Posterior cingulate gyrus (tissue), 11 donors: ENCODE measurements at regions of chr2 and their contacts with region 1.

Region 1: DNA sequence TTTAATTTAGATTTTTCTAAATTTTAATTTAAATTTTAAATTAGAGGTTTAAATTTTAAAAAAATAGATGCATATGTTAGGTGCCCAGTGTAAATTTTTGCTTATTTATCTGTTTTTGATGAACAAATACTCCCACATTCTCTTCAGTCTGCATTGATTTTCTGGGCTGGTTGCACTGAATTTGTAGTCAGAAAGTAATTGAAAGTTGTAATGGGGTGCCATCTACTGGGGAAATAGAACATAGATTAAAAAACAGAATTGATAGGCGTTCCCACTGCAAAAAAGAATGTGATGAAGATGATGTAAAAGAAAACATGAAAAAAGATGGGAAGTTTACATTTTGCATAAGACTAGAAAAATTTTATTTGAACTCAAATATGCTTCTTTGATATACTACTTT is 51.7 kb upstream of the CCDC85A start:
- DNase-seq: no peak

Region 2: DNA sequence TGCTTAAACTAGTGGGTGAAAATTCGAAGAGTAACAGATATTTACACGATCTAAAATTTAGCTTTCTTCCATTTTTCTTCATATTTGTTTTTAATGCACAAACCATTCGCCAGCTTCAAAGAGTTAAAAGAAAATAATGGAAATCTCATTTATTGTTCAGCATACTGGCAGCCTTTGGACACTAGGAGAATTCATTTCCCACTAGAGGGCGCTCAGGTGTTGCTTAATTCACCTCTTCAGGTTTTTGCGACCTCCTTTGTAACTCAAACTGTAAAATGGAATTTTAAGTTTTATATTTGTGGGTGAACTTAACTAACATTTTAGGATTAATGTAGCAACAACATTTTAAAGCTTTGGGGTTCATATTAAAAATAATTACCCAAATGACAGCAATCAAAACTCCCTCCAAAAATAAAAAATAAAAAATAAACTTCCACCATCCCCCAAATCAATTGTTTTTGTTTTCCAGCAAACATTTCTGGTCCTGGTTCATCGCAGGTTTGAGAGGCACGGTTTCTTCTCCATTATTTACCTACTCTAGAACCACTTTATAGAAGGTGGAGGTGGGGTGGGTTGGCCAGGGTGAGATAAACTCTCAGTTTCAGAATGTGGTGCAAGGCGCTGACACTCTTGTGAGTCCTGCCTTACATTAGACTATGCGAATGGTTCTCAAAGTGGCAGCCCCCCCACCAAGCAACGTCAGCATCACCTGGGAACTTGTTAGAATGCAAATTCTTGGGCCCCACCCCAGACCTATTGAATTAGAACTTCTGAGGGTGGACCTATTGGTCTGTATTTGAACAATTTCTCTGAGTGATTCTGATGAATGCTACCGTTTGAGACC is 413.8 kb before region 1 on chr2:
- intact Hi-C with region 1: loop called (anchors 1 kb)
- DNase-seq: peak in 4 of 10 donors; percentile 41 to 59 (median 45)

Region 3: DNA sequence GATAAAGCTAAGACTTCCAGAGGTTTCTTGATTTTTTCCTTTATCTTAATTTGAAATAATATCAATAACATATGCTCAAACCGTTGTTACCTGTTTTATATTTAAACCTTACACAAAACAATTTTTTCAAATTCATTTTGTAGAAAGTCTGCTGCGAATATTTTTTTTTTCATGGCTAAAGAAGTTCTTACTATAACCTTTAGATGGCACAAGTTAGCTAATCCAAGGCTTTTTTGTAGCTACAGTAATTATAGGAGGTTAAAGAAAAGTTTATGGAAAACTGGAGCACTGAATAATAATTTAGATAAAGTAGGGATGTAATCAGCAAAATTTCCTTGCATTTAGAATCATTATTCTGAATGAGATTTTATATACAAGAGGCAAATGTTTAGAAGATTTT is 360.5 kb before region 1 on chr2:
- intact Hi-C with region 1: loop called (anchors 5 kb)
- DNase-seq: no peak

Region 4: DNA sequence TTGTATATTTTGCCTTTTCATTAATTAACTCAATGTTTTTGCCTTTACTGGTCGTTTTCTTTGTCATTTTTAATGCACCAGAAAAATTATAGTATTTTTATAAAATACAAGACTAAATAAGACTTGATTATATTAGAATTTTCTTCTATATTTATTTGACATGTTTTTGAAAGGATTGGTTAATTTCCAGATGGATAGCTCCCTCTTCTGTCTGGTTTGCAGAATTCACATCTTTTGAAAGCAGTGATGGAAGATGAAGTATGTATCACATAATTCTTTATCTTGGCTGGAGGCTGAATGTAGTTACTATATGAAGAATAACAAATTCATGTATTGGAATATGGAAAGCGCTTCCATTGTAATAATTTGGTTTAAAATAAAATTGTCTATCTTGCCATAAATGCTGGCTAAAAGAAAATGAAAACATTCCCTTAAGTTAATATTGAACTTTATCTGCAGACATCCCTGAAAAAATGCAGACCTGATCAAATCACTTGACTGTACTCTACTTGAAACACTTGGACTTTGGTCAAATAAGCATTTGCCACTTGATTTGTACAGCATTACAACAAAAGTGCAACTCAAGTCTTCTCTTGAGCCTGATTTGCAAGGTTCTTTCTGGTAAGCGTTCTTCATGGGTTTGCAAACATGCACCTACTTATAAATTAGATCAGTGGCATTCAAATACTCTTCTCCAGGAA is 122.2 kb before region 1 on chr2:
- intact Hi-C with region 1: loop called (anchors 10 kb)
- DNase-seq: no peak

Region 5: DNA sequence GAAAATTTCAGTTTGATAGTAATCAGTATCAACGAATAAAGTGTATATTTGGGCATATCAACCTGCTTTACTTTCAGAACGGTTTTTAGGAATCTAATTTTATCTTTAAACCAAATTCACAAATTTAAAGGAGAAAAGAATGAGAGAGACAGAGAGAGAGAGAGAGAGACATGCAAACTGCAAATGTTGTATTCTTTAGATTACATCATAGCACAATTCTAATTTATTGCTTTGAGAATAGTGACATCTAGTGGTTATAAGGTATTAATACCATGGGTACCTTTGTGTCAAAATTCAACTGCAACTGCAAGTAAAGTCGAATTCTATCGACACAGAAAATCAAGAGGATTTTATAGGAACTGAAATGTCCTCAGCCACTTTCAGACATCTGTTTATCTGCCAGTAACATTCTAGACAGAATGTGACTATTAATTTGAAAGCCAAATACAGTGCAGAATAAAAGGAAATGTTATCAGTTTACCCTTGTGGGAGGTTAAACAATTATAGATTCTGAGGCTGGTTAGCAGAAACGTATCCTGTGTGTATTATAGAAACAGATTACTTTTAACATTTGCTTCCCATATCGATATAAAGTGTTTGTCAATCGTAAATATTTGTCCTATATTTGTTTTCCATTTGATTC is 1384.7 kb after region 1 on chr2:
- intact Hi-C with region 1: loop called (anchors 5 kb)
- DNase-seq: no peak